IMR-90 (cell line): ENCODE measurements at regions of chr2 and their contacts with region 1.

Region 1: DNA sequence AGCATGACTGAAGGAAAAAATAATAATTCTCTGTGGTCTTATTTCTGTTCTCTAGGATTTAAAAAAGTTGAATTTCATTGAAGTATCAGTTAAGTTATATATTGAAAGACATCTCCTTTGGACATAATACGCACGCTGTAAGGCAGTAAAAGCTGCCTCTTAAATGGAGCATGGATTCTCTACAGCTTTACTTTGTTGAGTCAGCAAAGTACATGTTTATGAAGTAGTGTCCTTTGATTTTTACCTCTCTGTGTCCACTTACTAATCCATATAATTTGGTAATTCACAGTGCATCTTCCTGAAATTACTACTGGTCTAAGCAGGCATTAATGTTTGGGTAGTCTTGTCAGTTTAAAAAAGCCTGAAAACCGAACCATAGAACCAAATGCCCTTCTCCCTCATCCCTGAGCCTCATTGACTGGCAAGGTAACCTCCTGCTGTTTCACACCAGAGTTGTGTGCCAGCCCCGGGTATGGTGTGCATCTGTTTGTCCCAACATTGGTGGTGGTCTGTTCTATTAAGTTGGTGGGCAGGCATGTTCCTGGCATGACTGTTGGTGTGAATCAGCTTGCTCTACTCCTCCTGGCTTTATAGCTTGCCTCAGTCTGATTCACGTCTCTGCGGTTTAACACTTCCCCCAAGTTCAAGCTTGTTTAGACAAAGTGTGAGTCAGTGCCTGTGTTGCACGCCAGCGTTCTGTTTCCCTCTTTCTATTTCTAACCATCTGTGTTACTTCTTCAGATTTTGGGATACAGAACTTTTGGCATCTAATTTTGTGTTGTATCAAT is 71.0 kb upstream of the ITM2C start:
- DNase-seq: peak; percentile 100
- ATAC-seq: peak; percentile 87
- H3K4me3 ChIP-seq: no peak overlapping the region
- H3K27ac ChIP-seq: peak overlapping the region; percentile 86
- H3K4me1 ChIP-seq: peaks cover 28% of the 10 kb centered on the region
- H3K27me3 ChIP-seq: no peaks in the 10 kb centered on the region
- CTCF ChIP-seq: no peak
- POLR2A ChIP-seq: peak; percentile 75; the same call in 1 of the 2 replicates
- RAD21 ChIP-seq: 0 out of 2 replicates have a peak, but pooled peaks have one; percentile 10

Region 2: GRCh38 chr2:230758566-230759480 is 34.9 kb before region 1 on chr2:
- CTCF ChIA-PET with region 1: interaction called, 3 read pairs
- POLR2A ChIA-PET with region 1: no interaction called
- dilution Hi-C with region 1: no loop called
- in situ Hi-C with region 1: no loop called
- intact Hi-C with region 1: loop called (anchors 1 kb)
- DNase-seq: peak; percentile 94
- ATAC-seq: peak; percentile 69
- H3K4me3 ChIP-seq: no peak overlapping the region
- H3K27ac ChIP-seq: peak overlapping the region; percentile 90; the same call in 1 of the 2 replicates
- H3K4me1 ChIP-seq: peaks cover 22% of the 10 kb centered on the region
- H3K27me3 ChIP-seq: no peaks in the 10 kb centered on the region
- CTCF ChIP-seq: no peak
- POLR2A ChIP-seq: no peak
- RAD21 ChIP-seq: no peak